A673 (cell line): ENCODE measurements at regions of chr14 and their contacts with region 1.

Region 1: DNA sequence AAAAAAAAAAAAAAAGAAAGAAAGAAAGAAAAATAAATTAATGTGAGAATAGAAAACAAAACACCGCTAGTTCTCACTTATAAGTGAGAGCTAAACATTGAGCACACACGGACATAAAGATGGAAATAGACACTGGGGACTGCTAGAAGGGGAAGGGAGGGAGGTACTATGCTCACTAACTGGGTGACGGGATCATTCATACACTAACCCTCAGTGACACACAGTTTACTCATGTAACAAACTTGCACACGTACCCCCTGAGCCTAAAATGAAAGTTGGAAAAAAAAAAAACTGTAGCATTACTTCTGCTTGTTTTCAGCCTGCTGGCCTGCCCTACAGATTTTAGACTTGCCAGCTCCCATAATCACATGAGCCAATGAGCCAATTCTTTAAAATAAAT is 10.5 kb upstream of the PRMT5 start:
- DNase-seq: no peak
- H3K4me3 ChIP-seq: no peak overlapping the region
- H3K27ac ChIP-seq: no peak overlapping the region
- H3K4me1 ChIP-seq: no peaks in the 10 kb centered on the region
- H3K27me3 ChIP-seq: no peaks in the 10 kb centered on the region
- CTCF ChIP-seq: no peak

Region 2: DNA sequence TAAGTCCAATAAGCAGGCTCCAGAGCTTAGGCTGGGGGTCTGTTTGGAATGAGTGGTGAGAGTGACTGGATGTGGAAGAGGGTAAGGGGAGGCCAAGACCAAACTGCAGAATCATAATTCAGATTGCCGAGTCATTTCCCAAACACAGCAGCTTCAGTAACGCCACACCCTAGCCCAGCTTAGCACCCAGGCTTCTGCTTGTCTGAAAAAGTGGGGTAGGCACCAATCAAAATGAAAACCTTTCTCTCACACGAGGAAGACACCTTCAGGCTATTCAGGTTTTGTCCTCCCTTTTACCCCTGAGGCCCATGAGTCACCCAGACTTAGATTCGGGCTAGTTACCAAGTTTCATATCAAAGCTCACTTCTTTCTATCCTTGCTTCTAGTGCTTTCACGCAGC is 656.7 kb before region 1 on chr14:
- CTCF ChIA-PET with region 1: no interaction called
- POLR2A ChIA-PET with region 1: interaction called, 14 read pairs
- intact Hi-C with region 1: no loop called
- DNase-seq: peak; percentile 21
- H3K4me3 ChIP-seq: no peak overlapping the region
- H3K27ac ChIP-seq: no peak overlapping the region
- H3K4me1 ChIP-seq: peaks cover 8% of the 10 kb centered on the region
- H3K27me3 ChIP-seq: no peaks in the 10 kb centered on the region
- CTCF ChIP-seq: no peak

Region 3: DNA sequence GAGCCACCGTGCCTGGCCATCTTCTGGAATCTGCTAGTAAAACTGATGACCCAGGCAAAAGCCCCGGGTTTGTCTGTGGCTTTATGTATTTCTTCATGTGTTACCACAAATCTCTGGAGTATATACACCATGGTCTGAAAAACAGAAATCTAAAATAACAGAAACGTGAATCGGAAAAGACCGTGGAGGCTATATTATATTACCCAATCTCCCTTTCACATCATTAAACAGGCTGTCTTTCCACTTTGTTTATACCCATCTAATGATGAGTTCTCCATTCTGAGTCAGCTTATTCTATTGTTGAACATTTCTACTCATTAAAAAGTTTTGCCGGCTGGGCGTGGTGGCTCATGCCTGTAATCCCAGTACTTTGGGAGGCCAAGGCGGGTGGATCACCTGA is 52.2 kb after region 1 on chr14:
- CTCF ChIA-PET with region 1: no interaction called
- POLR2A ChIA-PET with region 1: no interaction called
- intact Hi-C with region 1: no loop called
- DNase-seq: no peak
- H3K4me3 ChIP-seq: no peak overlapping the region
- H3K27ac ChIP-seq: no peak overlapping the region
- H3K4me1 ChIP-seq: peaks cover 20% of the 10 kb centered on the region
- H3K27me3 ChIP-seq: no peaks in the 10 kb centered on the region
- CTCF ChIP-seq: no peak